Activated B cell treated with CpG ODN at 0.5 μM for 24 hours (primary cell): ENCODE measurements at regions of chr19 and their contacts with region 1.

Region 1: DNA sequence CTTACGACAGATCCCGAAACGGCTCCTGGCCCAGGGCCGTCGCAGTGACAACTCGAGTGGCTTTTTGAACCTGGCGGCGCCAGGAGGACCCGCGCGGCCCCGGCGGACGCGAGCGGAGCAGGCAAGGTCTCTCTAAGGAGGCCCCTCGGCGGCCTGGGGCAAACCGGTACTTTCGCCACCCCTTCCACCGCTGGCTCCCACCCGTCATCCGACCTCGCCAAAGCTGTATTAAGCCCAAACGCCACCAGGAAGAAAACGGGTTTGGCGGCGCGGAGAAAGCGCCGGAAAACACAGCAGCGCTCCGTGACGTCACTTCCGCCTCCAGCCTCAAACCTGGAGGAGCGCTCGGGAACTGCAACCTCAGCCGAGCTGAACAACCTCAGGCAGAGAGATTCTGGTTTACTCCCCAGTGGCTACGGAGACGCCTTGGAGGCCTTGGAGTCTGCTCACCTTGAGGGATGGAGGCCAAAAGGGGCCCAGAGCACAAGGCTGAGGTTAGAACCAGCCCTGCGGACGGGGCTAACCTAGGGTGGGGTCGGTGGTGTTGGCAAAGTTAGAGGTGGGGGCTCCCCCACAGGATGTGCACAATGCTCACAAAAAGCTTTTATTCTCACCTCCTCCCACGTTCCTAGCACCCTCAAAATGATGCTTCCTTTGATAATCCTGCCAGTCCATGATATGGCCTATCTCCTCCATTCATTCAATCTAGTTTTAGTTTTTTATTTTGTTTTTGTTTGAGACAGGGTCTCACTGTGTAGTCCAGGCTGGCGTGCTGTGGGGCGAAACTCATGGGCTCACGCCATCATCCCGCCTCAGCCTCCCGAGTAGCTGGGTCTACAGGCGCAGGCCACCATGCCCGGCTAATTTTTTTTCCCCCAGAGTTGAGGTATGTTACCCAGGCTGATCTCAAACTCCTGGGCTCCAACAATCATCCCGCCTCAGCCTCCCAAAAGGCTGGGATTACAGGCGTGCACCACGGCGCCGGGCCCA is at the start of gene ZNF266:
- DNase-seq: peak; percentile 84
- ATAC-seq: peak; percentile 92
- H3K4me3 Mint-ChIP-seq: peak within 1 kb of the TSS; percentile 92
- H3K27ac Mint-ChIP-seq: peak within 1 kb of the TSS; percentile 97
- H3K4me1 Mint-ChIP-seq: peaks cover 38% of the 10 kb centered on the region
- H3K27me3 Mint-ChIP-seq: no peaks in the 10 kb centered on the region
- CTCF ChIP-seq: peak; percentile 28
- total RNA-seq, gene ZNF266: 43.7 and 50.3 TPM in 2 replicates

Region 2: DNA sequence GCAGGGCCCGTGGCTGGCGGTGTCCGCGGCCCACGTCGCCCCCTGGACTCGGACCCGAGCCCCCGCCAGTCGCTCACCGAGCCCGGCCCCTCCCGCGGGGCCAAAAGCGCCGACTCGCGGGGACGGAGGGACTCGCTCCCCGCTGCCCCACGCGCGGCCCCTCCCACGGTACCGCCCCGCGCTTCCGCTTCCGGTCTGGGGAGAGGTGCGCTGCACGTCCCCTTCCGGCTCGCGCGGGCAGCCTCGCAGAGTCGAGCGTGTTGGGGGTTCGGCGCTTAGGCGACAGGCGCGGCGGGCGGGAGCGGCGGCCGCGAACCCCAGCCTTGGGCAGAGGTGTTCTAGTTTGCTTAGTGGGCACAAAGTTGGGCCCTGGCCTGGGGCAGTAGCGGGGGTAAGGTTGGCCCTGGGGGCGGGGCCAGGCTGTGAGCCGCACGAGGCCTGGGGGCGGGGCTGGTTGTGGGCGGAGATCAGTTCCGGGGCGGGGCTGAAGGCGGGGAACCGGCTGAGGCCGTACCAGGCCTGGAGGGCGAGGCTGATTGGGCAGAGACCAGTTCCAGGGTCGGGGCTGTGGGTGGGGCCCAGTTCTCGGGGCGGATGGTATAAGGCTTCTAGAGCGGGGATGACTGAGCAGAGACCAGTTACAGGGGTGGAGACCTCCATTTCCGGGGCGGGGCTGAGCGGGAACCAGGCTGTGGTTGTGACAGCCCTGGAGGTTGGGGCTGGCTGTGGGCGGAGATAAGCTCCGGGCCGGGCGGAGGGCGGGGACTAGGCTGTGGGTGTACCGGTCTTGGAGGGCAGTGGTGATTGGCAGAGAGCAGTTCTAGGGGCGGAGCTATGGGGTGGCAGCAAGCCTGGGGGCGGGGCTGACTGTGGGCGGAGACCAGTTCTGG is 603.2 kb before region 1 on chr19 and contains the starts of genes MBD3L1 and ZNF558:
- CTCF ChIA-PET with region 1: no interaction called
- POLR2A ChIA-PET with region 1: no interaction called
- intact Hi-C with region 1: loop called (anchors 5 kb)
- DNase-seq: peak; percentile 99
- ATAC-seq: peak; percentile 88
- H3K4me3 Mint-ChIP-seq: peak within 1 kb of the TSS; percentile 87
- H3K27ac Mint-ChIP-seq: peak within 1 kb of the TSS; percentile 90
- H3K4me1 Mint-ChIP-seq: peaks cover 15% of the 10 kb centered on the region
- H3K27me3 Mint-ChIP-seq: no peaks in the 10 kb centered on the region
- CTCF ChIP-seq: no peak
- total RNA-seq, gene MBD3L1: not detected in 2 replicates
- total RNA-seq, gene ZNF558: 23.2 and 25.4 TPM in 2 replicates

Region 3: DNA sequence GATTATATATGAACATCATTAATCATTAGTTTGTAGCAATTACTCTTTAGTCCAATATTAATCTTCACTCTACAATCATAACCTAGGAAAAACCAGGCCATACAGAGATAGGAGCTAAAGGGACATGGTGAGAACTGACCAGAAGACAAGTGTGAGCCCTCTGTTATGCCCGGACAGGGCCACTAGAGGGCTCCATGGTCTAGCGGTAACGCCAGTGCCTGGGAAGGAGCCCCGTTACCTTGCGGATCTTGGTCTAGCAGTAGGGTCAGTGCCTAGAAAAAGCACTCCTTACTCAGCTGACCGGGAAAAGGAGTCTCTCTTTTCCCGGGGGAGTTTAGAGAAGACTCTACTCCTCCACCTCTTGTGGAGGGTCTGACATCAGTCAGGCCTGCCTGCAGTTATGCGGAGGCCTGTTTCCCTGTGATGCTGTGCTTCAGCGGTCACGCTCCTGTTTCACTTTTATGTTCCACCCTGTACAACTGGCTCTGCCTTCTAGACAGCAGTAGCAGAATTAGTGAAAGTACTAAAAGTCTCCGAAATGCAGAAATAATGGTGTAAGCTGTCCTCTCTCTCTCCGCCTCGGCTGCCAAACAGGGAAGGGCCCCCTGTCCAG is 230.0 kb before region 1 on chr19:
- CTCF ChIA-PET with region 1: interaction called, 5 read pairs
- POLR2A ChIA-PET with region 1: no interaction called
- intact Hi-C with region 1: loop called (anchors 2 kb)
- DNase-seq: peak; percentile 54
- ATAC-seq: peak; percentile 66
- H3K4me3 Mint-ChIP-seq: peak overlapping the region; percentile 66
- H3K27ac Mint-ChIP-seq: no peak overlapping the region
- H3K4me1 Mint-ChIP-seq: peaks cover 7% of the 10 kb centered on the region
- H3K27me3 Mint-ChIP-seq: peaks cover 8% of the 10 kb centered on the region
- CTCF ChIP-seq: peak; percentile 72

Region 4: GRCh38 chr19:9323919-9324583 is 111.5 kb before region 1 on chr19 and contains the start of gene ZNF559:
- CTCF ChIA-PET with region 1: no interaction called
- POLR2A ChIA-PET with region 1: interaction called, 10 read pairs
- intact Hi-C with region 1: loop called (anchors 2 kb)
- DNase-seq: peak; percentile 98
- ATAC-seq: peak; percentile 96
- H3K4me3 Mint-ChIP-seq: peak within 1 kb of the TSS; percentile 95
- H3K27ac Mint-ChIP-seq: peak within 1 kb of the TSS; percentile 95
- H3K4me1 Mint-ChIP-seq: peaks cover 20% of the 10 kb centered on the region
- H3K27me3 Mint-ChIP-seq: no peaks in the 10 kb centered on the region
- CTCF ChIP-seq: no peak
- total RNA-seq, gene ZNF559: 22.0 and 22.8 TPM in 2 replicates

Region 5: DNA sequence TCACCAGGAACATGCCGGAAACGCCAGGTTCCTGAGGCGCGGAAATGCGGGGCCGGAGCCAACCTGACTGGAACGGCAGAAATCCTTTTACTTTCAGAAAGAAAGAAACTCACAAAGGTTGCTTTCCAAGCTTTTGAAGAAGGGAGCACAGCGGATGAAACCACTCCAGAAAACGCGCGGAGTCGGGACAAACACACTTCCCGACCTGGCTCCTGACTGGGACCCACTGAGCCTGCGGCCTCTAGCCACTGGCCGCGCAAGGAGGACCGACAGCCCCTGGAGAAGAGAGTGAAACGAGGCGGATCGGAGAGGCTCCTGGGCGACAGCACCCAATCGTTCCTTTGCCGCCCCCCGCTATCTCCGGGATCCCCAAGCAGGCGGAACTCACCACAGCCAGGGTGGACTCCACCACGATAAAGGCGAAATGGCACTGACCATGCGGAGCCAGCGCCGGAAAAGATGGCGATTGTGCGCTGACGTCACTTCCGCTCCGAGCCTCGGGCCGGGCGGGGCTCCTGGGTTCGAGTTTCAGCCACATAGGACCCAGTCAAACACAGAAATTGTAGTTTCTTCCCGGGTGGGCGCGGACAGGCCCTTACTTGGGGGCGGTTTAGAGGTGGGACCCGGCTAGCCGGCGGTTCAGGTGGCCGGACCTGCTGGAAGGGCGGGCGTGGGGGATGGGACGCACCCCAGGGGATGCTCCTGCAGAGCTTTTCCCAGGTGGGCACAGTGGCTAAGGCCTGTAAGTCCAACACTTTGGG is 148.7 kb after region 1 on chr19 and contains the start of gene ZNF121:
- CTCF ChIA-PET with region 1: no interaction called
- POLR2A ChIA-PET with region 1: interaction called, 3 read pairs
- intact Hi-C with region 1: loop called (anchors 5 kb)
- DNase-seq: peak; percentile 80
- ATAC-seq: peak; percentile 84
- H3K4me3 Mint-ChIP-seq: peak within 1 kb of the TSS; percentile 95
- H3K27ac Mint-ChIP-seq: peak within 1 kb of the TSS; percentile 94
- H3K4me1 Mint-ChIP-seq: peaks cover 46% of the 10 kb centered on the region
- H3K27me3 Mint-ChIP-seq: peaks cover 6% of the 10 kb centered on the region
- CTCF ChIP-seq: no peak
- total RNA-seq, gene ZNF121: 53.7 and 57.0 TPM in 2 replicates

Region 6: GRCh38 chr19:9768175-9769112 is 332.9 kb after region 1 on chr19 and contains the start of gene ZNF846:
- CTCF ChIA-PET with region 1: no interaction called
- POLR2A ChIA-PET with region 1: interaction called, 10 read pairs
- intact Hi-C with region 1: no loop called
- DNase-seq: peak; percentile 91
- ATAC-seq: peak; percentile 98
- H3K4me3 Mint-ChIP-seq: peak within 1 kb of the TSS; percentile 90
- H3K27ac Mint-ChIP-seq: peak within 1 kb of the TSS; percentile 94
- H3K4me1 Mint-ChIP-seq: peaks cover 9% of the 10 kb centered on the region
- H3K27me3 Mint-ChIP-seq: no peaks in the 10 kb centered on the region
- CTCF ChIP-seq: no peak
- total RNA-seq, gene ZNF846: 7.9 and 10.7 TPM in 2 replicates